ENCODE measurements at regions of chr16 and their contacts with region 1.

Region 1: GRCh38 chr16:89507834-89508590 is at the start of gene SPG7:
- DNase-seq: peak; percentile 95
- ATAC-seq: peak; percentile 75
- H3K4me3 ChIP-seq: peak within 1 kb of the TSS; percentile 61 to 92 (median 73)
- H3K4me3 Mint-ChIP-seq: peak within 1 kb of the TSS; percentile 94
- H3K27ac ChIP-seq: peak within 1 kb of the TSS; percentile 71 to 87
- H3K27ac Mint-ChIP-seq: peak within 1 kb of the TSS; percentile 88
- H3K4me1 ChIP-seq: peaks cover 34 to 38% of the 10 kb centered on the region in 2 donors
- H3K4me1 Mint-ChIP-seq: peaks cover 31% of the 10 kb centered on the region
- H3K27me3 ChIP-seq: no peaks in the 10 kb centered on the region
- H3K27me3 Mint-ChIP-seq: no peaks in the 10 kb centered on the region
- CTCF ChIP-seq: no peak
- total RNA-seq, gene SPG7: 146 and 153 TPM in 2 replicates

Region 2: DNA sequence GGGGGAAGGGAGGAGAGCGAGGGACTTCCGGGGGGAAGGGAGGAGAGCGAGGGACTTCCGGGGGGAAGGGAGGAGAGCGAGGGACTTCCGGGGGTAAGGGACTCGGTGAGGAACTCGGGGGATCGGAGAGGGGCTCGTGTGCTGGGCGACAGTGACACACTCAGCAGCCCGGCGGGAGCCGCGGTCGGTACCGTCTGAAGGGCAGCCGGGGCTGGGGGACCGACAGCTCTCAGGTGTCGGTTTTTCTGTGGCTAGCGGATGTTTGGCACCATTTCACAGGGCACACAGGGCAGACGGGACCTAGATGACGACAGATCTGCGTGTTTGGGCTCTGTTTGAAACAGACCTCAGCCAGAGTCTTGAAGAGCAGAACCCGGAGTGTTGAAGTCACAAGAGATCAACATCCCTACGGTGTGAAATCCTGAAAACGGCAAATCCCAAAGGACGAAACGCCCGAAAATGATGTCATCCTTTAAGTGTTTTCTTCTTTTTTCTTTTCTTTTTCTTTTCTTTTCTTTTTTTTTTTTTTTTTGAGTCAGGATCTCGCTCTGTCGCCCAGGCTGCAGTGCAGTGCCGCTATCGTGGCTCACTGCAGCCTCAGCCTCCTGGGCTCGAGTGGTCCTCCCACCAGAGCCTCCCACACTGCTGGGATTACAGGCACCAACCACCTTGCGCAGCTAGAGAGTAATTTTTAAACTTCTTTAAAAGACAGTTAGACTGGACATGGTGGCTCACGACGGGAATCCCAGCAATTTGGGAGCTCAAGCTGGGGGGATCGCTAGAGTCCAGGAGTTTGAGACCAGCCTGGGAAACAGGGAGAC is 266.6 kb before region 1 on chr16:
- CTCF ChIA-PET with region 1: interaction called, 17 read pairs
- POLR2A ChIA-PET with region 1: interaction called, 3 read pairs
- intact Hi-C with region 1: loop called (anchors 1 kb)
- DNase-seq: peak; percentile 94
- ATAC-seq: peak; percentile 77
- H3K4me3 ChIP-seq: peak overlapping the region; percentile 74 to 95 (median 82)
- H3K4me3 Mint-ChIP-seq: peak overlapping the region; percentile 99
- H3K27ac ChIP-seq: peak overlapping the region; percentile 93 to 97
- H3K27ac Mint-ChIP-seq: peak overlapping the region; percentile 100
- H3K4me1 ChIP-seq: peaks cover 0 to 11% of the 10 kb centered on the region in 2 donors
- H3K4me1 Mint-ChIP-seq: peaks cover 14% of the 10 kb centered on the region
- H3K27me3 ChIP-seq: no peaks in the 10 kb centered on the region
- H3K27me3 Mint-ChIP-seq: no peaks in the 10 kb centered on the region
- CTCF ChIP-seq: no peak

Region 3: GRCh38 chr16:89334988-89335802 is 172.8 kb before region 1 on chr16:
- CTCF ChIA-PET with region 1: interaction called, 19 read pairs
- POLR2A ChIA-PET with region 1: interaction called, 5 read pairs
- intact Hi-C with region 1: loop called (anchors 1 kb)
- DNase-seq: no peak
- ATAC-seq: no peak
- H3K4me3 ChIP-seq: no peak overlapping the region
- H3K4me3 Mint-ChIP-seq: no peak overlapping the region
- H3K27ac ChIP-seq: no peak overlapping the region
- H3K27ac Mint-ChIP-seq: no peak overlapping the region
- H3K4me1 ChIP-seq: peaks cover 34 to 60% of the 10 kb centered on the region in 2 donors
- H3K4me1 Mint-ChIP-seq: peaks cover 69% of the 10 kb centered on the region
- H3K27me3 ChIP-seq: no peaks in the 10 kb centered on the region
- H3K27me3 Mint-ChIP-seq: no peaks in the 10 kb centered on the region
- CTCF ChIP-seq: no peak

Region 4: GRCh38 chr16:89460553-89460952 is 47.5 kb before region 1 on chr16:
- CTCF ChIA-PET with region 1: interaction called, 4 read pairs
- POLR2A ChIA-PET with region 1: no interaction called
- intact Hi-C with region 1: loop called (anchors 2 kb)
- DNase-seq: peak; percentile 55
- ATAC-seq: peak; percentile 31
- H3K4me3 ChIP-seq: no peak overlapping the region
- H3K4me3 Mint-ChIP-seq: no peak overlapping the region
- H3K27ac ChIP-seq: no peak overlapping the region
- H3K27ac Mint-ChIP-seq: no peak overlapping the region
- H3K4me1 ChIP-seq: peaks cover 3 to 6% of the 10 kb centered on the region in 2 donors
- H3K4me1 Mint-ChIP-seq: peaks cover 39% of the 10 kb centered on the region
- H3K27me3 ChIP-seq: no peaks in the 10 kb centered on the region
- H3K27me3 Mint-ChIP-seq: no peaks in the 10 kb centered on the region
- CTCF ChIP-seq: no peak

Region 5: DNA sequence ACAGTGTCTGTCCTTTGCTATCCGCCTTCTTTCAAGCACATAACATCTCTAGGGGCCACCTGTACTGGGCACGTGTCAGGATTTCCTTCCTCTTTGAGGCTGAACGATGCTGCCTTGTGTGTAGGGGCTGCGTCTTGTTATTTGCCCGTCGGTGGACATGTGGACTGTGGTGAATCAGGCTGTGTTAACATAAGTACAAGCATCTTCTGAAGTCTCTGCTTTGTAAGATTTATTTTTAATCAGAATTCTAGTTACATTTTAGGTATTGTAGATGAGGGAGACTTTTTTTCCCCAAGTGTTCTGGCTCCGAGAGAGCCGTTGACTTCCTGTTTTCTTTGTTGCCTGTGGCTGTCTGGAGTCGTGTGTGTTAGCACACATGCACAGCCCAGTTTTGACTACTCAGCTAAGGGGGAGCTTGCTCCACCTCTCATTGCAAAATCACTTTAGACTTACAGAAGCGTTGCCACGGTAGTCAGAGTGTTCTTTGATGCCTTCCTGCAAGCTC is 26.3 kb after region 1 on chr16:
- CTCF ChIA-PET with region 1: no interaction called
- POLR2A ChIA-PET with region 1: interaction called, 5 read pairs
- intact Hi-C with region 1: loop called (anchors 1 kb)
- DNase-seq: peak; percentile 82
- ATAC-seq: peak; percentile 91
- H3K4me3 ChIP-seq: peak overlapping the region in 4 of 5 experiments; percentile 13 to 39 (median 22)
- H3K4me3 Mint-ChIP-seq: peak overlapping the region; percentile 80
- H3K27ac ChIP-seq: peak overlapping the region; percentile 43 to 81
- H3K27ac Mint-ChIP-seq: peak overlapping the region; percentile 88
- H3K4me1 ChIP-seq: peaks cover 23 to 24% of the 10 kb centered on the region in 2 donors
- H3K4me1 Mint-ChIP-seq: peaks cover 22% of the 10 kb centered on the region
- H3K27me3 ChIP-seq: no peaks in the 10 kb centered on the region
- H3K27me3 Mint-ChIP-seq: no peaks in the 10 kb centered on the region
- CTCF ChIP-seq: no peak

Region 6: GRCh38 chr16:89842471-89843408 is 334.7 kb after region 1 on chr16:
- CTCF ChIA-PET with region 1: no interaction called
- POLR2A ChIA-PET with region 1: interaction called, 14 read pairs
- intact Hi-C with region 1: no loop called
- DNase-seq: no peak
- ATAC-seq: no peak
- H3K4me3 ChIP-seq: no peak overlapping the region
- H3K4me3 Mint-ChIP-seq: no peak overlapping the region
- H3K27ac ChIP-seq: no peak overlapping the region
- H3K27ac Mint-ChIP-seq: peak overlapping the region; percentile 2
- H3K4me1 ChIP-seq: peaks cover 11 to 20% of the 10 kb centered on the region in 2 donors
- H3K4me1 Mint-ChIP-seq: peaks cover 22% of the 10 kb centered on the region
- H3K27me3 ChIP-seq: no peaks in the 10 kb centered on the region
- H3K27me3 Mint-ChIP-seq: no peaks in the 10 kb centered on the region
- CTCF ChIP-seq: no peak

Measured in B cell (primary cell).